Activated CD4-positive, alpha-beta memory T cell treated with anti-CD3 and anti-CD28 coated beads for 36 hours (primary cell): ENCODE measurements at regions of chr2 and their contacts with region 1.

Region 1: DNA sequence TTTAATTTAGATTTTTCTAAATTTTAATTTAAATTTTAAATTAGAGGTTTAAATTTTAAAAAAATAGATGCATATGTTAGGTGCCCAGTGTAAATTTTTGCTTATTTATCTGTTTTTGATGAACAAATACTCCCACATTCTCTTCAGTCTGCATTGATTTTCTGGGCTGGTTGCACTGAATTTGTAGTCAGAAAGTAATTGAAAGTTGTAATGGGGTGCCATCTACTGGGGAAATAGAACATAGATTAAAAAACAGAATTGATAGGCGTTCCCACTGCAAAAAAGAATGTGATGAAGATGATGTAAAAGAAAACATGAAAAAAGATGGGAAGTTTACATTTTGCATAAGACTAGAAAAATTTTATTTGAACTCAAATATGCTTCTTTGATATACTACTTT is 51.7 kb upstream of the CCDC85A start:
- DNase-seq: no peak
- H3K4me3 Mint-ChIP-seq: no peak overlapping the region
- H3K27ac Mint-ChIP-seq: no peak overlapping the region
- H3K4me1 Mint-ChIP-seq: no peaks in the 10 kb centered on the region
- H3K27me3 Mint-ChIP-seq: no peaks in the 10 kb centered on the region

Region 2: GRCh38 chr2:56177420-56178220 is 45.5 kb after region 1 on chr2:
- CTCF ChIA-PET with region 1: no interaction called
- POLR2A ChIA-PET with region 1: no interaction called
- intact Hi-C with region 1: no loop called
- DNase-seq: no peak
- H3K4me3 Mint-ChIP-seq: no peak overlapping the region
- H3K27ac Mint-ChIP-seq: no peak overlapping the region
- H3K4me1 Mint-ChIP-seq: no peaks in the 10 kb centered on the region
- H3K27me3 Mint-ChIP-seq: peaks cover 17% of the 10 kb centered on the region

Region 3: GRCh38 chr2:56239437-56239836 is 107.3 kb after region 1 on chr2:
- CTCF ChIA-PET with region 1: no interaction called
- POLR2A ChIA-PET with region 1: no interaction called
- intact Hi-C with region 1: no loop called
- DNase-seq: no peak
- H3K4me3 Mint-ChIP-seq: no peak overlapping the region
- H3K27ac Mint-ChIP-seq: no peak overlapping the region
- H3K4me1 Mint-ChIP-seq: no peaks in the 10 kb centered on the region
- H3K27me3 Mint-ChIP-seq: no peaks in the 10 kb centered on the region

Region 4: DNA sequence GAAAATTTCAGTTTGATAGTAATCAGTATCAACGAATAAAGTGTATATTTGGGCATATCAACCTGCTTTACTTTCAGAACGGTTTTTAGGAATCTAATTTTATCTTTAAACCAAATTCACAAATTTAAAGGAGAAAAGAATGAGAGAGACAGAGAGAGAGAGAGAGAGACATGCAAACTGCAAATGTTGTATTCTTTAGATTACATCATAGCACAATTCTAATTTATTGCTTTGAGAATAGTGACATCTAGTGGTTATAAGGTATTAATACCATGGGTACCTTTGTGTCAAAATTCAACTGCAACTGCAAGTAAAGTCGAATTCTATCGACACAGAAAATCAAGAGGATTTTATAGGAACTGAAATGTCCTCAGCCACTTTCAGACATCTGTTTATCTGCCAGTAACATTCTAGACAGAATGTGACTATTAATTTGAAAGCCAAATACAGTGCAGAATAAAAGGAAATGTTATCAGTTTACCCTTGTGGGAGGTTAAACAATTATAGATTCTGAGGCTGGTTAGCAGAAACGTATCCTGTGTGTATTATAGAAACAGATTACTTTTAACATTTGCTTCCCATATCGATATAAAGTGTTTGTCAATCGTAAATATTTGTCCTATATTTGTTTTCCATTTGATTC is 1384.7 kb after region 1 on chr2:
- CTCF ChIA-PET with region 1: no interaction called
- POLR2A ChIA-PET with region 1: no interaction called
- intact Hi-C with region 1: loop called (anchors 5 kb)
- DNase-seq: no peak
- H3K4me3 Mint-ChIP-seq: no peak overlapping the region
- H3K27ac Mint-ChIP-seq: no peak overlapping the region
- H3K4me1 Mint-ChIP-seq: no peaks in the 10 kb centered on the region
- H3K27me3 Mint-ChIP-seq: no peaks in the 10 kb centered on the region